ENCODE measurements at regions of chr9 and their contacts with region 1.

Region 1: DNA sequence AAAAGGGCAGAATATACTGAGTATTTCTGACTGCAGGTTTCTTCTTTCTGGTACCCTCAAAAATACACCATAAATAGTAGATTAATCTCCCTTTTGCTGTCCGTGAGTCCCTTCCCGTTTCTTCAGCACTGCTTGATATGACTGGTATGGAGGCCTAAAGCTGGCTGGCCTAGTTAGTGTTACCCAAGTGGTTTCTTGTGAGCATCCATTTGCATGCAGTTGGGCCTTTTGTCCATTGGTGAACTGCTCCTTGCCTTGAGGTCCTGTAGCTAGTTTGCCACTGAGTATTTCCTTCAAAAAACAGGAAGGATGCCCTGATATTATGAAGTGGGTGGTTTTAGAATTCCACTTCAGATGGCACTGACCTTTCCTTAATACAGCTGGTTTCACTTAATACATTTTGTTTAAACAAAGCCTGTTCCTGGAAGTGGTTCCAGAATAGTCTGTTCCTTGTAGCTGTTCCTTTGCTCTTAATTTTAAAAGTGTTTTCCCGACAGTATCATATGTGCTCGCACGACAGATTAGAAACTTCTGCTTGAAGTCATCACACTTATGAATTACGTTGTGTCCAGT is 40.0 kb upstream of the ABL1 start:
- DNase-seq: no peak
- H3K4me3 Mint-ChIP-seq: no peak overlapping the region
- H3K27ac Mint-ChIP-seq: peak overlapping the region; percentile 70
- H3K4me1 Mint-ChIP-seq: peaks cover 13% of the 10 kb centered on the region
- H3K27me3 Mint-ChIP-seq: no peaks in the 10 kb centered on the region
- CTCF ChIP-seq: no peak

Region 2: DNA sequence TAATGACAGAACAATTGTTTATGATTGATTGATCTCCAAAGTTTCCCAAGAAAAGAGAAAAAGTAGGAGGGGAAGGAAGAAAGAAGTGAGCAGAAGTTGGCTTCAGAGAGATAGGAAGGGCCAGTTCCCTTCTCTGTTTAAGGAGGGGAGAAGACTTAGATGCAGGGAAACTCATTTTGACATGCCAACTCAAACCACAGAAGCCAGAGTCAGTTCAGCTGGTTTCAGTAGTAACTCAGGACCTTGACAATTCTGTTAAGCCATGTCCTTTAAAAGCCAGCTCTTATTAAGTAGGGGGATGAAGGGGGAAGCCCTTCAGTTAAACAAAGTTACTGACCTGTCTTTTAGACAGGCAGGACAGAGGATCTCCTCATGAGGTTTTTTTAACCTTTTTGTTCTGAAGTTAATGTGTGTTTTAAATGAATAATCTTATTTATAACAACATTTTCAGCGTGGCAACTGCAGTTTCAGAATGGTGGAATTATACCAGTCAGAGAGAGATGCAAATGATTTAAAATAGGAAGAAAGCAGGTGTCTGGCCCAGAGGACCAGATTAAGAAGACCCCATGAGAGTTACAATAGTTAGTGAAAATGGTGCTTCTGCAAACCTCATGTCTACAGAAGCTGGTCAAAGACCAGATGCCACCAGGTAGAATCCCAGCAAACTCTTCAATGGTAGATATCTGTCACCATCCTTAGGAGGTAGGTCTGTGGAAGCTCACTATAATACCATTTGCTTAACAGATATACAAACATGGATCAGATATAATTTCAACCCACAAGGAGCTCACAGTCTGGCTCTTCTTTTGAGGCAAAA is 10.7 kb after region 1 on chr9:
- CTCF ChIA-PET with region 1: interaction called, 7 read pairs
- POLR2A ChIA-PET with region 1: interaction called, 12 read pairs
- intact Hi-C with region 1: no loop called
- DNase-seq: no peak
- H3K4me3 Mint-ChIP-seq: no peak overlapping the region
- H3K27ac Mint-ChIP-seq: no peak overlapping the region
- H3K4me1 Mint-ChIP-seq: peaks cover 7% of the 10 kb centered on the region
- H3K27me3 Mint-ChIP-seq: no peaks in the 10 kb centered on the region
- CTCF ChIP-seq: no peak

Measured in MCF 10A (cell line).